ENCODE measurements at regions of chr12 and their contacts with region 1.

Region 1: DNA sequence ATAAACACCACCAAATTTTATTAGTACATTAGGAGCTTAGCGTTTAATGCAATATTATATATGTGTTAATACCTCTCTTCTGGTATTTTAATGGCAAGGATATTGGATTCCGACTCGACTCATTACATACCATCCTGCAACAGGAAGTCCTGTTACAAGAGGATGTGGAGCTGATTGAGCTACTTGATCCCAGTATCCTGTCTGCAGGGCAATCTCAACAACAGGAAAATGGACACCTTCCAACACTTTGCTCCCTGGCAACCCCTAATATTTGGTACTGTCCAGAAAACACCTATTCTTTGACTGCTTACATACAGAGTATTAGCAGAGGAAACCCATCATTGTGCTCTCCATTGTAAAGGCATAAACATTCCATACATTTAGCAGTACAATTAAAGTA is 45.2 kb downstream of the VEZT start:
- DNase-seq: no peak
- H3K4me3 Mint-ChIP-seq: no peak overlapping the region
- H3K27ac Mint-ChIP-seq: no peak overlapping the region
- H3K4me1 Mint-ChIP-seq: peaks cover 18% of the 10 kb centered on the region
- H3K27me3 Mint-ChIP-seq: no peaks in the 10 kb centered on the region
- CTCF ChIP-seq: no peak

Region 2: DNA sequence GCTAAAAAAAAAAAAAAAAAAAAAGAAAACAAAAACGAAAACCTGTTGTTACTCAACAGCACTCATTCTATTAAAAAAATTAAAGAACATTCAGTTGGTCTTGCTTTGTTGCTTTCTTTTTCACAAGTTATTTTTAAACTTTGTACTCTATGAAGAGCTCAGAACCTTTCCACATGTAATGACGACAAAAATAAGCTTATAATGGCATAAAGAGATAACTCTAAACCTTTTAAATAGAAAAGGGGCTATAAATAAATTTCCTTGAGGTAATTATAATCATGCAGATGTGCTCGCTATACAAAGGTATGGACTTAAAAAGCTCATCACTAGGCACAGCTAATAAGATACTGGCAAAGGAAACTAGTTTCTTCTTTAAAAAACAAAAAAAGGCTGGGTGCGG is 202.8 kb before region 1 on chr12:
- CTCF ChIA-PET with region 1: interaction called, 15 read pairs
- intact Hi-C with region 1: no loop called
- DNase-seq: no peak
- H3K4me3 Mint-ChIP-seq: no peak overlapping the region
- H3K27ac Mint-ChIP-seq: no peak overlapping the region
- H3K4me1 Mint-ChIP-seq: no peaks in the 10 kb centered on the region
- H3K27me3 Mint-ChIP-seq: no peaks in the 10 kb centered on the region
- CTCF ChIP-seq: no peak

Region 3: DNA sequence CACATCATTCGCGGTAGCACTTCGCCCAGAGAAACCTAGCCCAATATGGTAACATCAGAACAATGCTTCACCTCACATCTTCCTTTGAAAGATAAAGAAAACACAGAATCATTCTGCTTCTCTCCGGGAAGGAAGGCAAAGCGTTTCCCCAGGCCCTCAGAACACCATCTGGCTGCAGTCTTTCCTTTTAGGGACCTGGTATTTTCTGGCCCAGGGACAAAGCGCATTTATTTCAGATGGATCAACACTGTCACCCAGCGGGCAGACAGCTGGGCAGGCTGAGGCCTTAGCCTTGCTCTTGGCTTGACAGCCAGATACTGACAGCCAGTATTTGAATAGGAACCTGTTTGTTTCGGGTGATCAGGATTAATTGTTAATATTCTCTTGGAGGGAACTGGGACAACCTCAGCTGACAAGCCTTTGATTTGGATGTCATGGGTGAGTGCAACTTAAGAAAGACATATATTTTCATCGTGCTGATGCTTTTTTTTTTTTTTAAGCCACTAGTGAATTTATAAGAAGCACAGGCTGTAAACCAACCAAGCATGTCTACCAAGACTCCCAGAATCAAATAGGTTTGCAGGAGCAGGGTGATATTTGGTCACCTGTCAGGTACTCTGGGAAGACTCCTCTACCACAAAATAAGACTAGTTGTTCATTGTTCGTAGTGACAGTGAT is 73.7 kb after region 1 on chr12:
- CTCF ChIA-PET with region 1: no interaction called
- intact Hi-C with region 1: no loop called
- DNase-seq: peak; percentile 85
- H3K4me3 Mint-ChIP-seq: peak overlapping the region; percentile 11
- H3K27ac Mint-ChIP-seq: peak overlapping the region; percentile 42
- H3K4me1 Mint-ChIP-seq: peaks cover 34% of the 10 kb centered on the region
- H3K27me3 Mint-ChIP-seq: no peaks in the 10 kb centered on the region
- CTCF ChIP-seq: peak; percentile 84

Measured in Calu3 (cell line).